ENCODE measurements at regions of chr19 and their contacts with region 1.

Region 1: GRCh38 chr19:1438035-1438932 is at the start of gene RPS15:
- DNase-seq: peak; percentile 97
- total RNA-seq, gene RPS15: 479 TPM

Region 2: GRCh38 chr19:1383311-1384084 is 54.8 kb before region 1 on chr19 and contains the start of gene NDUFS7:
- intact Hi-C with region 1: loop called (anchors 2 kb)
- DNase-seq: peak; percentile 94
- total RNA-seq, gene NDUFS7: 233 TPM

Region 3: DNA sequence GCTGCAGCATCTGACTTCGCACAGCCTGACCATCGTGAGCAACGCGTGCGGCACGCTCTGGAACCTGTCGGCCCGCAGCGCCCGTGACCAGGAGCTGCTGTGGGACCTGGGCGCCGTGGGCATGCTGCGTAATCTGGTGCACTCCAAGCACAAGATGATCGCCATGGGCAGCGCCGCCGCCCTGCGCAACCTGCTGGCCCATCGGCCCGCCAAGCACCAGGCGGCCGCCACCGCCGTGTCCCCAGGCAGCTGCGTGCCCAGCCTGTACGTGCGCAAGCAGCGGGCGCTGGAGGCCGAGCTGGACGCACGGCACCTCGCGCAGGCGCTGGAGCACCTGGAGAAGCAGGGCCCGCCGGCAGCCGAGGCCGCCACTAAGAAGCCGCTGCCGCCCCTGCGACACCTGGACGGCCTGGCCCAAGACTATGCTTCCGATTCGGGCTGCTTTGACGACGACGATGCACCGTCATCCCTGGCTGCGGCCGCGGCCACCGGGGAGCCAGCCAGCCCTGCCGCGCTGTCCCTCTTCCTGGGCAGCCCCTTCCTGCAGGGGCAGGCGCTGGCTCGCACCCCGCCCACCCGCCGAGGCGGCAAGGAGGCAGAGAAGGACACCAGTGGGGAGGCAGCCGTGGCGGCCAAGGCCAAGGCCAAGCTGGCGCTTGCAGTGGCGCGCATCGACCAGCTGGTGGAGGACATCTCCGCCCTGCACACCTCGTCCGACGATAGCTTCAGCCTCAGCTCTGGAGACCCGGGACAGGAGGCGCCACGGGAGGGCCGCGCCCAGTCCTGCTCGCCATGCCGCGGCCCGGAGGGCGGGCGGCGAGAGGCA is 27.1 kb after region 1 on chr19:
- intact Hi-C with region 1: no loop called
- DNase-seq: no peak

Region 4: DNA sequence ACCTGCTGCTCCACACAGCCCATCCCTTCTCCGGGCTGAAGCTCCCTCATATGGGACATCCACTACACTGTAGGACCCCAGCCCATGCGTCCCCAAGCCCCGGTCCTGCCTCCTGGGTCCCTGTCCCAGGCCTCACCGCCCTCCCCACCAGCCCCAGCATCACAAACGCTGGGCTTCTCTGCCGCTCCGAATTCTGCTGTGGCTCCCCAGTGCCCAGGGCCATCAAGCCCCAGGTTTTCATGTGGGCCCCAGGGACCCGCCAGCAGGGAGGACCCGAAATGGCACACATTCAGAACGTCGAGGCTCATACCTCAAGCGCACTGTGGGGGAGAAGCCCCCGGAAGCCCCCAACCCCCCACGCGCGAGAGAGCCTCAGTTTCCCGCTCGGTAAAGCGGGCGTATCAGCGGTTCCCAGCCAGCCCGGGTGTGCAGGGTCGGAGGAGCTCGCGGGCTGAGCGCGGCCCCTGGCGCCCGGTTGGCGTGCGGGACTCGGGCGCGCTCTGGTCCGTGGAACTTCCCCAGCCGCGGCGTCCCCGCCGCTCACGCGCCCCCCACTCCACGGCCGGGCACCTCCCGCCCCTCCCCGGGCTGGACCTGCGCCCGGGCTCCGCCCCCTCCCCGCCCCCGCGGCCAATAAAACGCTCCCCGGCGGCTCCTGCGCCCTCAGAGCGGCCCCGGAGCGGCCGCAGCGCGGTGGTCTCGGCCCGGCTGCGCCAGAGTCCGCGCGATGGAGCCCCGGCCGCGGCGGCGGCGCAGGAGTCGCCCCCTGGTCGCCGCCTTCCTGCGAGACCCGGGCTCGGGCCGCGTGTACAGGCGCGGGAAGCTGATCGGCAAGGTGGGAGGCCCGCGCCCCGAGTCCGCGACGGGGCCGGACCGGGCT is 85.4 kb after region 1 on chr19 and contains the start of gene PLK5:
- intact Hi-C with region 1: no loop called
- DNase-seq: no peak
- total RNA-seq, gene PLK5: not detected

Region 5: GRCh38 chr19:1675633-1676350 is 237.5 kb after region 1 on chr19:
- intact Hi-C with region 1: no loop called
- DNase-seq: no peak

Measured in cardiac septum (tissue), 1 donor.